Right ventricle myocardium inferior (tissue), 1 donor: ENCODE measurements at regions of chr1 and their contacts with region 1.

Region 1: DNA sequence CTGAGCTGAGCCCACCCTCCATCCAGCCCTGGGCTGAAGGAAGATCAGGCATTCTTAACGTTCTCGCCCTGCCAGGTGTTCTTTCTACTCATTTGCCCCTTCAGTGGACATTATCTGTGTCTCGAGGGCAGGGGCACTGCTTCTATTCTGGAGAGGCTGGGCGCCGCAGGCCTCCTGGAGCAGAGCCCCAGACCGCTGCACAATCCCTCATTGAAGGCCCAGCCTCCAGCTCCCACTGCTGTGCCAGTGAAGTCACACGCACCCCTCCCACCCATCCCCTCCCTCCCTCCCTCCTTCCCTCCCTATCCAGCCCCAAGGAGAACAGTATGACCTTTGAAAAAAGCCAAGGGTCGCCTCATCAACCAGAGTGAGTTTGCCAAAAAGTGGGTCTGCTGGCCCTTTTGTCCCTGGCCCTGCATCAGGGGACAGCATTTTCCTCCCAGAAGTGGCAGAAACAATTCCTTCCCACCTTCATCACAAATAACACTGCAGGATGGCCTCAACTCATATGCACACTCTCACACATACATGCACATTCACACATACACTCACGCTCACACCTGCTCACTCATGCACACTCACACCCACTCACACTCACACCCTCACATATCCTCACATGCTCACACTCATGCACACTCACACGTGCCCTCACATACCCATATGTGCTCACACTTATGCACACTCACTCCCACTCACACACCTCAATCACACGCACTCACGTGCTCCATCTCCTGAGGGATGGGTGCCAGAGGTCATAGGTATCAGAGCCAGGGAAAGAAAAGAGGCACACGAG is 76.9 kb downstream of the NFASC start:
- DNase-seq: no peak
- ATAC-seq: no peak

Region 2: GRCh38 chr1:204571141-204571540 is 376.4 kb before region 1 on chr1:
- intact Hi-C with region 1: loop called (anchors 2 kb)
- DNase-seq: no peak
- ATAC-seq: no peak